Psoas muscle (tissue), 8 donors: ENCODE measurements at regions of chr4 and their contacts with region 1.

Region 1: GRCh38 chr4:87093443-87094123 is 126.8 kb downstream of the KLHL8 start:
- DNase-seq: no peak
- ATAC-seq: peak; percentile 74 to 86 (median 74)
- H3K4me3 ChIP-seq: no peak overlapping the region
- H3K27ac ChIP-seq: peak overlapping the region; percentile 81
- H3K4me1 ChIP-seq: peaks cover 32% of the 10 kb centered on the region
- H3K27me3 ChIP-seq: no peaks in the 10 kb centered on the region
- CTCF ChIP-seq: peak; percentile 62

Region 2: GRCh38 chr4:86921608-86922252 is 171.9 kb before region 1 on chr4:
- intact Hi-C with region 1: loop called (anchors 2 to 5 kb)
- DNase-seq: no peak
- ATAC-seq: peak in 3 of 4 donors; percentile 49 to 69 (median 57)
- H3K4me3 ChIP-seq: no peak overlapping the region
- H3K27ac ChIP-seq: no peak overlapping the region
- H3K4me1 ChIP-seq: peaks cover 9% of the 10 kb centered on the region
- H3K27me3 ChIP-seq: no peaks in the 10 kb centered on the region
- CTCF ChIP-seq: no peak